HAP-1 (cell line): ENCODE measurements at regions of chr1 and their contacts with region 1.

Region 1: GRCh38 chr1:21956720-21957552 is 19.8 kb upstream of the HSPG2 start:
- DNase-seq: no peak
- H3K4me3 ChIP-seq: no peak overlapping the region
- H3K4me1 ChIP-seq: no peaks in the 10 kb centered on the region
- H3K27me3 ChIP-seq: no peaks in the 10 kb centered on the region

Region 2: GRCh38 chr1:21511579-21512522 is 445.1 kb before region 1 on chr1:
- in situ Hi-C with region 1: no loop called
- DNase-seq: no peak
- H3K4me3 ChIP-seq: no peak overlapping the region
- H3K4me1 ChIP-seq: peaks cover 22% of the 10 kb centered on the region
- H3K27me3 ChIP-seq: no peaks in the 10 kb centered on the region

Region 3: DNA sequence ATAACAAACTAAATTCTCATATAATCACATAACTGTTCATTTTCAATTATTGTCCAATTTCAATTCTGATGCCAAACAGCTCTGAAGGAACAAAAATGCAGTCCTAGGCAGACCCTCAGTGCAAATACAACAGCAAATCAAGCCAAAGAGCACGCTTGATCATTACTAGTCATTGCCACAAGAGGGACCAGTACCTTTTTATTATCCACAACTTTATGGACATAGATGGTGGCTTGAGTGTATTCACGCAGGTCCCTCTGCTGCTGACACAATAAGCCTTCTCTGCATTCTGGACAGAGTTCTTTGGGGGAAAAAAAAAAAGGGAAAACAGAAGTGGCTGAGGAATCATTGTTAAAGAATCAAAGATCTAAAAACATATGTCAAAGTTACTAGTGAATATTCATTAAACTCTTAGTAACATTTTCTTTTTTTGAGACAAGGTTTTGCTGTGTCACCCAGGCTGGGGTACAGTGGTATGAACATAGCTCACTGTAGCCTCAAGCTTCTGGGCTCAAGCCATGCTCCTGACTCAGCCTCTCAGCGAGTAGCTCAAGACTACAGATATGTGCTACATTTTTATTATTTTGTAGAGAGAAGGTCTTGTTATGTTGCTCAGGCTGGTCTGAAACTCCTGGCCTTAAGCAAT is 253.5 kb before region 1 on chr1:
- in situ Hi-C with region 1: loop called (anchors 10 kb)
- DNase-seq: peak; percentile 42 to 70
- H3K4me3 ChIP-seq: no peak overlapping the region
- H3K4me1 ChIP-seq: peaks cover 20% of the 10 kb centered on the region
- H3K27me3 ChIP-seq: no peaks in the 10 kb centered on the region